Heart right ventricle (tissue), 16 donors: ENCODE measurements at regions of chr12 and their contacts with region 1.

Region 1: DNA sequence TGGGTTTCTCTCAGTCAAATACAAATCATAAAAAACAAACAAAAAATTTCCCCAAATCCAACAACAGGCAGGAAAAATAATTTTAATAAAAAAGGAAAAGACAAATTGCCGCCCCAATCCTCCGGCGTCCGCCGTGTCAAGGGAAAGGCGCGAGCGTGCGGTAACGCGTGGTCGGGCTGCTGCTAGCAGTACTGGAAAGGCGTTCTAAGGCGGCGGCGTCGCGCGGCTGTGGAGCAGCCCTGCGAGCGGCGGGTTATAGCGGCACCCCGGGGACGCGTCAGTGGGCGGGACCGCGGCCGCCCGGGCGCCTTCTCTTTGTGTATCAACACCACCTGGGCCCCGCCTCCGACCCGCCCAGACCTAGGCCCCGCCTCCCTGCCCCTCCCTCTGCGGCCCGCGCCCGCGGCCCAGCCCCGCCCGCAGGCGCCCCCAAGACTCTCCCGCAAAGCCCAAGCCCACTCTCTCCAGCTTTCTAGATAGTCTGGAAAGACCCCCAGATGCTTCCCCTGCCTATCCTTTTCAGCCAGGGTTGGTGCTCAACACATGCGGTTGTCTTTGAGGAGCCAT is at the start of gene SLC38A2:
- DNase-seq: peak; percentile 97 to 99
- ATAC-seq: peak; percentile 95 to 98 (median 96)
- H3K4me3 ChIP-seq: peak within 1 kb of the TSS; percentile 73 to 98 (median 89)
- H3K27ac ChIP-seq: peak within 1 kb of the TSS; percentile 94 to 99 (median 98)
- H3K4me1 ChIP-seq: peaks cover 15 to 45% (median 38%) of the 10 kb centered on the region in 9 donors
- H3K27me3 ChIP-seq: no peaks in the 10 kb centered on the region
- CTCF ChIP-seq: no peak
- total RNA-seq, gene SLC38A2: 82.1 to 203 (median 110) TPM

Region 2: GRCh38 chr12:45990468-45991283 is 382.0 kb before region 1 on chr12 and contains the start of gene SCAF11:
- intact Hi-C with region 1: loop called in 1 of 10 experiments (anchors 5 kb)
- DNase-seq: peak; percentile 100
- ATAC-seq: peak; percentile 92 to 97 (median 95)
- H3K4me3 ChIP-seq: peak within 1 kb of the TSS; percentile 68 to 97 (median 86)
- H3K27ac ChIP-seq: peak within 1 kb of the TSS; percentile 96 to 100 (median 99)
- H3K4me1 ChIP-seq: peaks cover 7 to 49% (median 39%) of the 10 kb centered on the region in 9 donors
- H3K27me3 ChIP-seq: no peaks in the 10 kb centered on the region
- CTCF ChIP-seq: peak; percentile 90 to 98 (median 94)
- total RNA-seq, gene SCAF11: 71.9 to 112 (median 87.3) TPM

Region 3: DNA sequence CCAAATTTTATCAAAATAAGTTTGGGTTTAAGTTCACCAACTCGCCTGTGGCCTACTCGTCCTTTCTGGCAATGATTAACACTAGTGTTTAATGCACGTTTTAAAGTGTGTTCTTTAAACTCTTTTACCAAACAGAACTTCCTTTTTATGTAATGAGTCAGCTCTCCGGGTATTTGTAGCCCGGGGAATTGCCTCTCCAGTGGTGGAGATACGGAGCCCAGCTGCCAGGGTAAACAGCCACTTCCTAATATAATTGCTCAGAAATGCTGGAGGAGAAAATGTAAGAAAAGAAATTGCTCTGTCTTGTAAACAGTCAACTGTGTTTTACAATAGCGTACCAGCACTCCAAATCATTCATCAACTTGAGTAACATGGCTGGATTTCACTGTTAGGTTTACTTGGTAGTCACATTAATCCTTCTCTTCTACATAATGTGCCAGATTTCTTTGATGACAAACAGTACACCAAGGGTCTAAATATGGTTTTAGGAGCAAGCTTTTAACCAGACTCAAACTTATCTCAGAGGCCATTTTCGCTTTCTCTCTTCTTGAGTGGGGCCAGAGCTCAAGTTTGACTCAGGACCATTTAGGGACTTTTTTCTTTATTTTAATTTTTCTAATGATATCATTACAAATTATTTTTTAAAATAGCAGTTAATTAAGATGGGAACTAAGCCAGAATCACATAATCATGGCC is 101.2 kb after region 1 on chr12:
- intact Hi-C with region 1: loop called in 3 of 10 experiments (anchors 5 kb)
- DNase-seq: peak; percentile 41 to 74
- ATAC-seq: peak; percentile 74 to 95 (median 92)
- H3K4me3 ChIP-seq: peak overlapping the region in 1 of 10 donors; percentile 3
- H3K27ac ChIP-seq: peak overlapping the region; percentile 37 to 91 (median 86)
- H3K4me1 ChIP-seq: peaks cover 7 to 46% (median 29%) of the 10 kb centered on the region in 9 donors
- H3K27me3 ChIP-seq: no peaks in the 10 kb centered on the region
- CTCF ChIP-seq: no peak

Region 4: GRCh38 chr12:46534327-46534840 is 161.8 kb after region 1 on chr12:
- intact Hi-C with region 1: loop called in 1 of 10 experiments (anchors 5 kb)
- DNase-seq: no peak
- ATAC-seq: peak in 6 of 8 donors; percentile 17 to 80 (median 49)
- H3K4me3 ChIP-seq: no peak overlapping the region
- H3K27ac ChIP-seq: peak overlapping the region in 6 of 10 donors; percentile 2 to 48 (median 14)
- H3K4me1 ChIP-seq: peaks cover 0 to 49% (median 35%) of the 10 kb centered on the region in 9 donors
- H3K27me3 ChIP-seq: no peaks in the 10 kb centered on the region
- CTCF ChIP-seq: no peak

Region 5: DNA sequence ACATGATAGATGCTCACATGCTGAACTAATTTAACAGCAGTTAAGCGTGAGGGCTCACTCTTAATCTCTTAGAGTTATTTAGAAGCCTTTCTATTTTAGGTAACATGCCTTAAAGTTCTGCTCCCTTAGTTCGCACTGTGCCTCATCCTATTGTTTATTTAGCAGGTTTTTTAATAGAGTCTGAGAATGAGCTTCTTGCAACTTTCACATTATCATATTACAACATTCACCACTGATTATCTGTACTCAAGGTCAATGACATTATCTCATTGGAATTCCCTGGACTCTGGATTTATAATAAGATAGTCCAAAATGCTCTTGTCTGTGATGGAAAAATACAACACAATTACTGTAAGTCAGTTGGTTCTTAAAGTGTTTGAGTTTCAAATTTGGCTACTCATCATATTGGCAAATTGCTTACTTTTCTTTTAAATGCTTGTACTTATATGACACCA is 183.5 kb after region 1 on chr12:
- intact Hi-C with region 1: loop called in 2 of 10 experiments (anchors 5 to 10 kb)
- DNase-seq: no peak
- ATAC-seq: peak; percentile 79 to 95 (median 88)
- H3K4me3 ChIP-seq: no peak overlapping the region
- H3K27ac ChIP-seq: peak overlapping the region; percentile 25 to 77 (median 68)
- H3K4me1 ChIP-seq: peaks cover 0 to 53% (median 21%) of the 10 kb centered on the region in 9 donors
- H3K27me3 ChIP-seq: no peaks in the 10 kb centered on the region
- CTCF ChIP-seq: no peak